Psoas muscle (tissue), 8 donors: ENCODE measurements at regions of chr4 and their contacts with region 1.

Region 1: GRCh38 chr4:185210102-185210981 is 944 bp downstream of the SNX25 start:
- DNase-seq: peak; percentile 61 to 72
- ATAC-seq: peak; percentile 47 to 55 (median 52)
- H3K4me3 ChIP-seq: peak overlapping the region; percentile 71
- H3K27ac ChIP-seq: peak overlapping the region; percentile 90
- H3K4me1 ChIP-seq: peaks cover 14% of the 10 kb centered on the region
- H3K27me3 ChIP-seq: no peaks in the 10 kb centered on the region
- CTCF ChIP-seq: no peak

Region 2: DNA sequence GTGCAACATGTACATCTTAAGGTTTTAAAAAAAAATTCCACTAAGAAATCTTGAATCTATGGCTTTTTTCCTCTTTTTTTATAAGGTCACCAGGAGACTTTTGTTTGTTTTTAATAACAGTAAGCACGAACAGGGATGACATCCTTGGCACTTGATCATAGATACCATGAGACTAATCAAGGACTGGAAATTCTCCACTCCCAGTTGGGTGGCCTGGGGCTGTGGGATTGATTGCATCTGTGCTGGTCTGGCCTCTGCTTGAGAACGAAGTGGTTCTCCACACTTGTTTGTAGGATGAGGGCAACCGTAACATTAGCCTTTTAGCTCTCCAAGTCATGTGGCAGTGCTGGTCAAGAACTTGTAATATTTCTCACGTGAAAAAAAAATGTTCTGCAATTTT is 34.4 kb after region 1 on chr4:
- intact Hi-C with region 1: loop called in 1 of 2 experiments (anchors 5 kb)
- DNase-seq: no peak
- ATAC-seq: no peak
- H3K4me3 ChIP-seq: no peak overlapping the region
- H3K27ac ChIP-seq: no peak overlapping the region
- H3K4me1 ChIP-seq: no peaks in the 10 kb centered on the region
- H3K27me3 ChIP-seq: no peaks in the 10 kb centered on the region
- CTCF ChIP-seq: no peak

Region 3: DNA sequence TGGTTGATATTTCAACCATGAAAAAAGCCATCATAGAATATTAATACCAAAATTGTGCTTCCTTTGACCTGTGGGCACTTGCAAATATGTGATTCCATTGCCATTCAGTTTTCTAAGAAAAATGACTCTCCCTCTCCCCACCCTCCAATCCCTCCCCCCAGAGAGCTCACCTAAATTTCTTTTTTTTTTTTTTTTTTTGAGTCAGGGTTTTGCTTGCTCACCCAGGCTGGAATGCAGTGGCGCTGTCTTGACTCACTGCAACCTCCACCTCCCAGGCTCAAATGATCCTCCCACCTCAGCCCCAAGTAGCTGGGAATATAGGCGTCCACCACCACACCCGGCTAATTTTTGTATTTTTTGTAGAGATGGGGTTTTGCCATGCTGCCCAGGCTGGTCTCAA is 46.1 kb after region 1 on chr4:
- intact Hi-C with region 1: loop called in 1 of 2 experiments (anchors 5 kb)
- DNase-seq: no peak
- ATAC-seq: no peak
- H3K4me3 ChIP-seq: no peak overlapping the region
- H3K27ac ChIP-seq: no peak overlapping the region
- H3K4me1 ChIP-seq: peaks cover 13% of the 10 kb centered on the region
- H3K27me3 ChIP-seq: no peaks in the 10 kb centered on the region
- CTCF ChIP-seq: no peak

Region 4: GRCh38 chr4:185597532-185598188 is 387.3 kb after region 1 on chr4:
- intact Hi-C with region 1: loop called in 1 of 2 experiments (anchors 10 kb)
- DNase-seq: peak; percentile 73 to 85
- ATAC-seq: peak; percentile 73 to 86 (median 78)
- H3K4me3 ChIP-seq: no peak overlapping the region
- H3K27ac ChIP-seq: peak overlapping the region; percentile 42
- H3K4me1 ChIP-seq: peaks cover 8% of the 10 kb centered on the region
- H3K27me3 ChIP-seq: no peaks in the 10 kb centered on the region
- CTCF ChIP-seq: peak; percentile 100